Posterior vena cava (tissue), 2 donors: ENCODE measurements at regions of chr11 and their contacts with region 1.

Region 1: DNA sequence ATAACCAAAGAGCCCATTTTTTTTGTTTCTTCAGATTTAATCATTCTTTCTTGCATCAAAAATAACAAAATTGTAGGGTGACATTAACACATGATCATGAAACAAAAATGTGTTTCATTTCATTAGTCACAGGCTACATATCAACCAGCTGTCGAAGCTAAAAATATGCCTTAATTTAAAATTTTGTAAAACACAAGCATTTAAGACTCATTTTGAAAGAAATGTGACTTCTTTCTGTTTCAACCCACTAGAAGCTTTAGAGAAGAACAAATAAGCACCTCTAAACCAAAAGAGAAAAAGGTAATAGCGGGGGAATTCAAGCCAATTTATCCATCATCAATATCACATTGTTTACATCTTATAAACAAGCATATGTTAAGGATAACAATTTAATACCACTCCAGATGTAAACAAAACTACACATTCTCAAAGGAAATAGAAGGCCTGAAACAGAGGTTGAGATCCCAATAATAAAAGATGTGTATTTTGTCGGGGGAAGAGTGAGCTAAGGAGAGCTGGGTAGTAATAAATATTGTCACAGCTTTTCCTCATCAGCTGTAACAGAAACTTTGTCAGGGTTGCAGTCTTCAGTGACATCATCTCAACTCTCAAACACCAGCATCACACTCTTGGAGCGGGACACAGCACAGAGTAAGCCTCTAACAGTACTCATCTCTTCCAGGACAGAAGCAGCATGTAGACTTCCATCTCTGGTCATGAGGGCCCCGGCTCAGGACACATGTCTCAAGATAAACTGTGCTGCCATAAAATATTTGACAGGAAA is 42.0 kb downstream of the ALG9 start:
- DNase-seq: no peak

Region 2: GRCh38 chr11:111063726-111064517 is 765.5 kb before region 1 on chr11:
- intact Hi-C with region 1: no loop called
- DNase-seq: no peak

Region 3: GRCh38 chr11:111399187-111400031 is 430.0 kb before region 1 on chr11:
- intact Hi-C with region 1: loop called in 1 of 2 experiments (anchors 10 kb)
- DNase-seq: no peak

Region 4: DNA sequence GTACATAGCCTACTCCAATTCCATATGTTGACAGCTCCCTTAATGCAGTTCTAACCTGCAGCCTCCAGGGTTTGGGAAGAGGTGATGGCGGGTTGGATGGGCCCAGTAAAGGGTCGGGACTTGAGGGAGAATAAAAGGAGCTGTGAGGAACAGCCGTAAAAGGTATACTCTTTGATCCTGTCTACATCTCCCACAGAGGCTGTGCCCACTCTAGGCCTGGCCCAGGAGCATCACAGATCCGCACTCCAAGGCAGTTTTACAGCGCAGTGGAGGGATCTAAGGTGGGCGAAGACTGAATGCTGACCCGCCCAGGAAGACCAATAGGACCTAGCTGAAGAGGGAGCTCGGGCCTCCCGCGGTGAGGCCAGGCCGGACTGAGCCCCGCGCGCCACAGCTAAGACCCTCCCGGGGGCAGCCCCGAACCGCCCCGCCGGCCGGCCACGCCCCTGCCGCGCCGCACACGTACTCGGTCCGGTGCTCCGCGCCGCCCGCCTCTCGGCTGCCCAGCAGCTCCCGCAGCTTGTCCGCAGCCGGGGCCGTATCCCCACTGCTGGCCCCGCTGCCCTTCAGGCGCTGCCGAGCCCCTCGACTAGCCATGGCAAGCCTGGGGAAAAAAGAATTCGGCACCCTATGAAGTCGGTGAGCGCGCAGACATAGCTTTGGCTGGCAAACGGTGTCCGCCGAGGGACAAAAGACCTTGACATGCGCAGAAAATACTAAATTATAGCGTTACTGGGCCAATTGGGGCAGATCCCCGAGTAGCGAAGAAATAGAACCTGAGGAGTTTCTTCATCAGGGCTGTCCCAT is 41.7 kb after region 1 on chr11 and contains the start of gene ALG9:
- intact Hi-C with region 1: no loop called
- DNase-seq: peak; percentile 95
- total RNA-seq, gene ALG9: 21.8 to 23.8 TPM